Posterior vena cava (tissue), 2 donors: ENCODE measurements at regions of chr1 and their contacts with region 1.

Region 1: GRCh38 chr1:6922096-6922931 is 137.1 kb downstream of the CAMTA1 start:
- DNase-seq: peak; percentile 88

Region 2: DNA sequence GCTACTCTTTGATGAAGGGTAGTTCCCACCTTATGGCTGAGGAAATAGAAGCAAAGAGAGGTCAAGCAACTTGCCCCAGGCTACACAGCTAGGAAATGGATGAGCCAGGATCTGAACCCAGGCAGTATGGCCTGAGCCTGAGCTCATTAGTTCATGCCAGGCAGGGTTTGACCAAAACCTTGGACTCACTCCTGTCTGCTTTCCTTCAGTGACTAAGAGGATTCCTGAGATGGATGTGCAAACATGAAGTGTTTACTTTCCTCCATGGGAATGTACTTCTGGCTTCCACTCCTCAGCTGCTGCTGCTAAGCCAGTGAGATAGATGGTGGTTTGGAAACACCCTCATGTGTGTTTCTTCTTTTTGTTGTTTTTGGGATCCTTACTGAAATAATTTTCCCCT is 1138.9 kb after region 1 on chr1:
- intact Hi-C with region 1: loop called in 1 of 2 experiments (anchors 10 kb)
- DNase-seq: no peak